WTC11 (cell line): ENCODE measurements at regions of chr7 and their contacts with region 1.

Region 1: DNA sequence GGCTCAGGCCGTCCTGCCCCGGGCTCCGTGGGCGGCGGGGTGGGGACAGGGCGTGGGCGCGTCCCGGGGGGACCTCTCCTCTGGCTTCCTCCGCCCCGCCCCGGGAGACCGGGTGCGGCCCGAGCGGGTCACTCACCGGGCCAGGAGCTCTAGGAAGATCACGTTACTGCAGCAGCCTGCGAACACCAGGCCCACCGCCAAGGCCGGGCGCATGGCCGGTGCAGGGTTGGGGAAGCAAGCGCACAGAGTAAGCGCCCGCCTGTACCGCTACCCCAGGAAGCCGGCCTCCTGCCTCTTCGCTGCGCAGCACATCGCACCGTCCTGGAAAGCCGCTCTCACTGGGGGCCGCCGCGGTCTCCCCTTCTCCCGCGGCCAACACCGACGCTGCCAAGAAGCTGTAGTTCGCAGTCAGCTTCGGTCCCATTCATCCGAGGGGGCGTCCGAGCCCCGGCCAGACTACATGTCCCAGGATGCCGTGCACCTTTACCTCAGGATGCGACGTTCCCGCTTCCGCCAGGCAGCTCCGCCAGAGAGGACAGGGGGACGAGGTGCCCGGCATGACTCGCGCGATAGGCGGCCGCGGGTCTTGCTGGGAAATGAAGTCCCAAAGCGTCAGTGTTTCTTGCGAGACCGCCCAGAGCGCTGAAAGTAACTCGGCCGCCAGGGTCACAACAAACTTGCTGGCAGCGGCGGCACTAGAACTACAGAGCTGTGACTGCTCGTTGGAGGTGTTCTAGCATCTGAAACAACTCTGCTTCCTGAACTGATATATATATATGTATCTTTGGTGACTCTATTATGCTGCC is at the start of gene SLC35B4:
- DNase-seq: peak; percentile 98
- ATAC-seq: peak; percentile 99
- H3K4me3 Mint-ChIP-seq: peak within 1 kb of the TSS; percentile 87
- H3K27ac Mint-ChIP-seq: peak within 1 kb of the TSS; percentile 5
- H3K4me1 Mint-ChIP-seq: peaks cover 14% of the 10 kb centered on the region
- H3K27me3 Mint-ChIP-seq: peaks cover 15% of the 10 kb centered on the region
- CTCF ChIP-seq: no peak
- total RNA-seq, gene SLC35B4: 31.5 to 35.5 TPM (median 32.6 TPM) in 3 replicates

Region 2: DNA sequence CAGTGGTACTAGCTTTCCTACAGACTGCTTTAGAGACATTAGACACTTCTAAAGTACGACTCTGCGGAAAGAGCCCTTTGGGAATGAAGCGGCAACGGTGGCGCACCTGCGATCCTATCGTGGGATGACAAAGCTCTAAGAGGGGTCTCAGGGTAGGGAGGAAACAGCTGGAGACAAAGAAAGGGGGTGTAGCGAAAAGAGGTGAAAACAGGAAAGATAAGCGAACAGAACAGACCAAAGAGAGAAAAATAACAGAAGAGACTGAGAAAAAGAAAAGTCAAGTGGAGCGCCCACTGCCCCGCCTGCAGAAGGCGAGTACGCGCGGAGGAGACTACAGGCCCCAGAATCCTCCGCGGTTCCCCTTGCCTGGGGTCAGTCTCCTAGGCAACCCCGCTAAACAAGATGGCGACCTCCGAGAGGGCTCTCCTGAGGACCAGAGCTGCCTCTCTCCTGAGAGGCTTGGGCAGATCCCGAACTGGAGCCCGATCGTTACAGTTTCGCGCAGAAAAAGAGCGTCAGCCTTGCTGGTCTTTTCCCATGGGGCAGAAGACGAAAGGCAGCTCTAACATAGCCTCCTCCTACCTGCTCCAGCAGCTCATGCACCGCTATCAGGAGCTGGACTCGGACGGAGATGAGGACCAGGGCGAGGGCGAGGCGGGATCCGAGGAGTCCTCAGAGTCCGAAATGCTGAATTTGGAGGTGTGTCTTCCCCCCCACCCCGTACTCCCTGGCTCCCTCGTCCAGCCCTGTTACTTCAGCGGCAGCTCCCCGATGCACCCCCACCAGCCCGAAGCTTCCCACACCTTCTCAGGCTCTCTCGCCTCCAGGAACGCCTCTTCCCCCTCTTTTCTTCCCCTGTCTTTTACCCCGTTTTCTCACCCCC is 189.5 kb before region 1 on chr7 and contains the start of gene LRGUK:
- CTCF ChIA-PET with region 1: interaction called, 3 read pairs
- POLR2A ChIA-PET with region 1: interaction called, 10 read pairs
- DNase-seq: peak; percentile 87
- ATAC-seq: peak; percentile 98
- H3K4me3 Mint-ChIP-seq: peak within 1 kb of the TSS; percentile 88
- H3K27ac Mint-ChIP-seq: no peak within 1 kb of the TSS; the same call in 1 of the 2 replicates
- H3K4me1 Mint-ChIP-seq: peaks cover 53% of the 10 kb centered on the region
- H3K27me3 Mint-ChIP-seq: no peaks in the 10 kb centered on the region; the same call in 1 of the 2 replicates
- CTCF ChIP-seq: no peak
- total RNA-seq, gene LRGUK: 1.9 to 3.0 TPM (median 2.7 TPM) in 3 replicates

Region 3: GRCh38 chr7:134293002-134293740 is 23.6 kb before region 1 on chr7:
- CTCF ChIA-PET with region 1: no interaction called
- POLR2A ChIA-PET with region 1: no interaction called
- DNase-seq: no peak
- ATAC-seq: no peak
- H3K4me3 Mint-ChIP-seq: no peak overlapping the region
- H3K27ac Mint-ChIP-seq: no peak overlapping the region; the same call in 1 of the 2 replicates
- H3K4me1 Mint-ChIP-seq: peaks cover 14% of the 10 kb centered on the region
- H3K27me3 Mint-ChIP-seq: no peaks in the 10 kb centered on the region
- CTCF ChIP-seq: no peak

Region 4: GRCh38 chr7:134327896-134328295 is 11.2 kb after region 1 on chr7:
- CTCF ChIA-PET with region 1: interaction called, 14 read pairs
- POLR2A ChIA-PET with region 1: interaction called, 7 read pairs
- DNase-seq: peak; percentile 80
- ATAC-seq: peak; percentile 100
- H3K4me3 Mint-ChIP-seq: no peak overlapping the region
- H3K27ac Mint-ChIP-seq: no peak overlapping the region
- H3K4me1 Mint-ChIP-seq: no peaks in the 10 kb centered on the region; the same call in 1 of the 2 replicates
- H3K27me3 Mint-ChIP-seq: no peaks in the 10 kb centered on the region
- CTCF ChIP-seq: peak; percentile 31

Region 5: GRCh38 chr7:134357492-134357891 is 40.8 kb after region 1 on chr7:
- CTCF ChIA-PET with region 1: interaction called, 21 read pairs
- POLR2A ChIA-PET with region 1: interaction called, 10 read pairs
- DNase-seq: no peak
- ATAC-seq: no peak
- H3K4me3 Mint-ChIP-seq: no peak overlapping the region
- H3K27ac Mint-ChIP-seq: no peak overlapping the region
- H3K4me1 Mint-ChIP-seq: no peaks in the 10 kb centered on the region
- H3K27me3 Mint-ChIP-seq: peaks cover 14% of the 10 kb centered on the region
- CTCF ChIP-seq: no peak; the same call in 1 of the 2 replicates

Region 6: GRCh38 chr7:134420424-134421125 is 103.8 kb after region 1 on chr7:
- CTCF ChIA-PET with region 1: interaction called, 10 read pairs
- POLR2A ChIA-PET with region 1: no interaction called
- DNase-seq: peak; percentile 58
- ATAC-seq: peak; percentile 95
- H3K4me3 Mint-ChIP-seq: no peak overlapping the region
- H3K27ac Mint-ChIP-seq: no peak overlapping the region
- H3K4me1 Mint-ChIP-seq: peaks cover 10% of the 10 kb centered on the region
- H3K27me3 Mint-ChIP-seq: no peaks in the 10 kb centered on the region
- CTCF ChIP-seq: 0 out of 2 replicates have a peak, but pooled peaks have one; percentile 17